Activated T-helper 2 cell treated with anti-CD3 and anti-CD28 coated beads, Interferon-gamma antibody, Interleukin-2, Interleukin-4, amounts not matched to agents 10 μg/mL and 5 μg/mL and 100 μg/mL, durations not matched to agents 14 hours and 24 hours and 36 hours (primary cell): ENCODE measurements at regions of chr17 and their contacts with region 1.

Region 1: GRCh38 chr17:75109407-75110233 is at the start of gene ARMC7:
- DNase-seq: peak; percentile 91
- H3K4me3 Mint-ChIP-seq: peak within 1 kb of the TSS; percentile 89
- H3K27ac Mint-ChIP-seq: peak within 1 kb of the TSS; percentile 80
- H3K4me1 Mint-ChIP-seq: peaks cover 24% of the 10 kb centered on the region
- H3K27me3 Mint-ChIP-seq: no peaks in the 10 kb centered on the region
- total RNA-seq, gene ARMC7: 9.9 and 10.1 TPM in 2 replicates

Region 2: GRCh38 chr17:74961657-74962490 is 147.7 kb before region 1 on chr17:
- intact Hi-C with region 1: loop called (anchors 5 kb)
- DNase-seq: peak; percentile 71
- H3K4me3 Mint-ChIP-seq: no peak overlapping the region
- H3K27ac Mint-ChIP-seq: no peak overlapping the region
- H3K4me1 Mint-ChIP-seq: peaks cover 4% of the 10 kb centered on the region
- H3K27me3 Mint-ChIP-seq: no peaks in the 10 kb centered on the region

Region 3: DNA sequence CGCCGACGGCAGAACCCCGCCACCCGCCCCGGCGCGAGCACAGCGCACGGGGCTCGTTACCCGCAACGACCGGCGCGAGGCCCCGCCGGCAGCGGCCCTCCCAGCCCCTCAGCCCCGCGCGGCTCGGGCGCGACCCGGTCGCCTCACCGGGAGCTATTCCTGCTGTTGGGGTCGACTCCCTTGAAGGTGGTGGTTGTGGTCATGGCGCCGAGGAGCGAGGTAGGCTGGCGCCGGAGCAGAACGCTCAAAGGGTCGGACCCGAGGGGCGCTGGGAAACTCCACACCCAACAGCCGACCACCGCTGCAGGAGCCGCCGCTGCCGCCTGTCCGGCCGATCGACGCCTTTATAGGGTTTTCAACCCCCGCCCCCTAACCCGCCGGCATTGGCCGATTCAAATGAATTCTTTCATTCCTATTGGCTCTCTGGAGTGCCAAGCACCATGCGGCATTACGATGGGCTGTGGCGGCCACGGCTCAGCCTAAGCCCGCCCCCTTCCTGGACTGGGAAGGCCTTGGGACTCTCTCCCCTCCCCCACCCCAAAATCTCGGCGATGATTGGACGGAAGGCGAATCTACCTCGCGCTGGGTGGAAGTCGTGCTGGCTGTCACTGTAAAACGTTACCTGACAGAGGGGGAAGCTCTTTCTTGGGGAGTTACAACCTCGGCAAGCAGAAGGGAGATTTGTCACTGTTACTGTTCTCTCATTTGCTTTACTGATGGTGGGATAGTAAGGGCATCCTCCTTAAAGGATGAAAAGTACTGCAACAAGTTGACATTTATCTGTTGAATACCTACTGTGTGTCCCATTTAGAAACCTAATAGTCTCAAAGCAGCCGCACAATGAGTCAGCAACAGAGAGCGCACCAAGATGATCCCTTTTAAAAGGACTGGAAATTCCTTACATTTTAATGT is 44.8 kb after region 1 on chr17 and contains the start of gene JPT1:
- intact Hi-C with region 1: loop called (anchors 2 kb)
- DNase-seq: peak; percentile 96
- H3K4me3 Mint-ChIP-seq: peak within 1 kb of the TSS; percentile 93
- H3K27ac Mint-ChIP-seq: peak within 1 kb of the TSS; percentile 84
- H3K4me1 Mint-ChIP-seq: peaks cover 33% of the 10 kb centered on the region
- H3K27me3 Mint-ChIP-seq: no peaks in the 10 kb centered on the region
- total RNA-seq, gene JPT1: 282 and 290 TPM in 2 replicates

Region 4: GRCh38 chr17:75205037-75205792 is 95.6 kb after region 1 on chr17 and contains the start of gene NUP85:
- intact Hi-C with region 1: loop called (anchors 1 kb)
- DNase-seq: peak; percentile 88
- H3K4me3 Mint-ChIP-seq: peak within 1 kb of the TSS; percentile 91
- H3K27ac Mint-ChIP-seq: peak within 1 kb of the TSS; percentile 96
- H3K4me1 Mint-ChIP-seq: peaks cover 11% of the 10 kb centered on the region
- H3K27me3 Mint-ChIP-seq: no peaks in the 10 kb centered on the region
- total RNA-seq, gene NUP85: 115 and 122 TPM in 2 replicates

Region 5: GRCh38 chr17:75412455-75413317 is 303.1 kb after region 1 on chr17:
- intact Hi-C with region 1: loop called (anchors 1 kb)
- DNase-seq: peak; percentile 73
- H3K4me3 Mint-ChIP-seq: peak overlapping the region; percentile 53
- H3K27ac Mint-ChIP-seq: no peak overlapping the region
- H3K4me1 Mint-ChIP-seq: peaks cover 26% of the 10 kb centered on the region
- H3K27me3 Mint-ChIP-seq: peaks cover 19% of the 10 kb centered on the region